Gastrocnemius medialis (tissue), 4 donors: ENCODE measurements at regions of chr20 and their contacts with region 1.

Region 1: DNA sequence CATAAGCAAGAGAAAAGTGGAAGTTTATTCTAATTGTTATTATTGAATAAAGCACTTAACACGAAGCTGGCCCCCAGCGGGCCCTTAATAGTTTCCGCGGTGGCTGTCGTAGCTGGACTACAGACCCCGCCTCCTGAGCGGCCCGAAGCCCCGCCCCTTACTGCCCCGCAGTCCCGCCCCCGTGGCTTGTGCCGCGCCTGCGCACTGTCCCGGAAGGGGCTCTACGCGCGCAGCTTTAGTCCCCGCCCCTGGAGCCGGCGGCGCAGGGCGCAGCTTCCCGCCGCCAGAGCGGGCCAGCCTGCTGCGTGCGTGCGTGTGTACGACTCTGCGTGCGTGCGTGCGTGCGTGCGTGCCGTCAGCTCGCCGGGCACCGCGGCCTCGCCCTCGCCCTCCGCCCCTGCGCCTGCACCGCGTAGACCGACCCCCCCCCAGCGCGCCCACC is at the start of gene VAPB:
- DNase-seq: peak; percentile 89 to 93
- ATAC-seq: peak; percentile 93 to 94
- H3K4me3 ChIP-seq: peak within 1 kb of the TSS; percentile 76 to 90 (median 87)
- H3K27ac ChIP-seq: peak within 1 kb of the TSS; percentile 94 to 97 (median 96)
- H3K4me1 ChIP-seq: peaks cover 41 to 43% of the 10 kb centered on the region in 2 donors
- H3K27me3 ChIP-seq: no peaks in the 10 kb centered on the region
- CTCF ChIP-seq: no peak
- POLR2A ChIP-seq: peak; percentile 83 to 86
- total RNA-seq, gene VAPB: 30.4 to 37.7 (median 32.8) TPM

Region 2: DNA sequence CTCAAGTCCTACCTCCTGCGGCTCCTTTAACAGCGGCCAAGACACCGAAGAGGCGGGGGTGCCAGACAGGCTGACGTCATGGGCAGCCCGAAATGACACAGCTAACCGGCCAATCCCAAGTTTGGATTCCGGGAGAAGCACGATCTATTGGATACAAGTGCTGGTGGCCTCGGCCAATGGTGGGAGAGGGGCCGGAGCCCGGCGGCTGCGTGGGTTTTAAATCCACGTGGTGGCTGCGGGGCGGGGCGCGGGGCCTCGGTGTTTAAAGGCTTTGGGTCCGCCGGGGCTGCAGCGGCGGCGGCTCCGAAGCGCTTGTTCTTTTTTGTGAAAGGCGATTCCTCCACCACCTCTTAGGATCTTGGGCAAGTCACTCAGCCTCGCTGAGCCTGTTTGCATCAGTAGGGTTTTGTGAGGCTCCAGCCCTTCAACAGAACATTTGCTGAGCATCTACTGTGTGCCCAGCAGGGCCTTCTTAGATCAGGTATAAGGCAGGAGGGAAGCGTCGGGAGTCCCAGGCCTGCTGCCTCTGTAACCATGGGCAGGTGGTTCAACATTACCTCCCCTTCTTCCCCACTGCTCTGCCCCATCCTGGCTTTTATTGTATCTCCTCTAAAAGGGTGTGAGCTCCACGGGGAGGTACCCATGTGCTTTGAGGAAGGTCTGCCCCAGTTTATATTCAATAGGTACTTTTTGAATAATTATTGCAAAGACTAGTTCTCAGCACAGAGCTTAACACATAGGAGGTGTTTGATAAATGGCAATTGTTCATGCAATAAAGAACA is 670.2 kb before region 1 on chr20:
- in situ Hi-C with region 1: no loop called
- intact Hi-C with region 1: loop called (anchors 10 kb)
- DNase-seq: peak; percentile 97 to 98
- ATAC-seq: peak; percentile 92 to 96
- H3K4me3 ChIP-seq: peak overlapping the region; percentile 32 to 45 (median 36)
- H3K27ac ChIP-seq: peak overlapping the region; percentile 21 to 79 (median 57)
- H3K4me1 ChIP-seq: peaks cover 49 to 54% of the 10 kb centered on the region in 2 donors
- H3K27me3 ChIP-seq: no peaks in the 10 kb centered on the region
- CTCF ChIP-seq: no peak
- POLR2A ChIP-seq: no peak

Region 3: GRCh38 chr20:58330687-58331086 is 58.2 kb before region 1 on chr20:
- in situ Hi-C with region 1: no loop called
- intact Hi-C with region 1: loop called (anchors 5 kb)
- DNase-seq: peak; percentile 65 to 77
- ATAC-seq: peak; percentile 90 to 93
- H3K4me3 ChIP-seq: no peak overlapping the region
- H3K27ac ChIP-seq: peak overlapping the region; percentile 60 to 80 (median 66)
- H3K4me1 ChIP-seq: peaks cover 33 to 53% of the 10 kb centered on the region in 2 donors
- H3K27me3 ChIP-seq: no peaks in the 10 kb centered on the region
- CTCF ChIP-seq: no peak
- POLR2A ChIP-seq: no peak

Region 4: DNA sequence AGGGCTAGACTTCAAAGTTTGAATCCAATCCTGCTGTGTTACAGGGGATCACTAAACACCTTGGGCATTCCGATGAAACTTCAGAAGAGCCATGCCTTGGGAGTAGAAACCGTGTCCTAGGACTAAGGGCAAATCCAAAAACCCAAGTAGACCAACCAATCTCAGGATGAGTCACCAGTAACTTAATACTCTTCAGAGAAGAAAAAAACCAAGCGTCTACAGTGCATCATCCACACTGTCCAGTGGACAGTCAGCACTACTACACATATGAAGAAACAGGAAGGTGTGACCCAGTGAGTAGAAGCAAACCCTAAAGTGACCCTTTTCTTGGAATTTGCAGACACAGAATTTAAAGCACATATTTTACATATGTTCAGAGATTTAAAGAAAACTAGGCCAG is 39.3 kb before region 1 on chr20:
- in situ Hi-C with region 1: no loop called
- intact Hi-C with region 1: loop called (anchors 5 kb)
- DNase-seq: no peak
- ATAC-seq: peak; percentile 99 to 100
- H3K4me3 ChIP-seq: no peak overlapping the region
- H3K27ac ChIP-seq: peak overlapping the region in 1 of 4 donors; percentile 54
- H3K4me1 ChIP-seq: peaks cover 9 to 11% of the 10 kb centered on the region in 2 donors
- H3K27me3 ChIP-seq: no peaks in the 10 kb centered on the region
- CTCF ChIP-seq: peak in 2 of 5 experiments; percentile 18 to 19
- POLR2A ChIP-seq: no peak

Region 5: DNA sequence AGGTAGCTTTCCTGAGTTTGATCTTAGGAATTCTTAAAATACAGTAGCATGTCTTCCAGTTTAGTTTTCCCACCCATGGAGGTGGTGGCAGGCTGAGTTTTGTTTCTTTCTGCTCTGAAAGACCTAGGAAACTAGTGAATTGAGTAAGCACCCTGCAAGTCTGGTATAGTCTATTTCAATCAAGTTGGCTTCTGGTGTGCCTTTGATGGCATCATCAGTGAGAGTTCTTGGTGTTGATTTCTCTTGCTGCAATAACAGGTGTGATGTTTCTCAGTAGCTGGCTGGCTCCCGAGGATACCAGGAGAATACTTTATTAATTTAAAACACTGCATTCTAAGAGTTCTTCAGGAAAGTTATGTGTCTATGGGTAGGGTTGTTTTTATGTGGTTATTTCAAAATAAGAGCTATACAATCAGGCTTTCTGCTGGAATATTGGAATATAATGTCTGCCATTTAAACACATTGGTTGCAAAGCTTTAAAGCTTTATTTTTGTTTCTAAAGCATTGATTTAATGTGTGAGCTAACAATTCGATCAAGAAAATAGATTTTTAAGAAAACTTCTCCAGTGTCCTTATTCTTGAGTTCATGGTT is 19.2 kb after region 1 on chr20:
- in situ Hi-C with region 1: no loop called
- intact Hi-C with region 1: loop called (anchors 1 kb)
- DNase-seq: peak; percentile 59 to 69
- ATAC-seq: peak; percentile 98 to 99
- H3K4me3 ChIP-seq: peak overlapping the region; percentile 8 to 28 (median 16)
- H3K27ac ChIP-seq: peak overlapping the region; percentile 80 to 81 (median 80)
- H3K4me1 ChIP-seq: peaks cover 64 to 76% of the 10 kb centered on the region in 2 donors
- H3K27me3 ChIP-seq: no peaks in the 10 kb centered on the region
- CTCF ChIP-seq: no peak
- POLR2A ChIP-seq: no peak